Activated CD8-positive, alpha-beta T cell treated with anti-CD3 and anti-CD28 coated beads, Interleukin-2, amount 10 ng/mL, durations not matched to agents 7 days and 5 days (primary cell): ENCODE measurements at regions of chr7 and their contacts with region 1.

Region 1: GRCh38 chr7:50304158-50304910 is at the start of gene IKZF1:
- DNase-seq: peak; percentile 69
- ATAC-seq: peak; percentile 43
- H3K4me3 Mint-ChIP-seq: peak within 1 kb of the TSS; percentile 92
- H3K27ac Mint-ChIP-seq: peak within 1 kb of the TSS; percentile 98
- H3K4me1 Mint-ChIP-seq: peaks cover 35% of the 10 kb centered on the region
- H3K27me3 Mint-ChIP-seq: no peaks in the 10 kb centered on the region
- total RNA-seq, gene IKZF1: 370 to 374 TPM

Region 2: GRCh38 chr7:50047716-50048115 is 256.6 kb before region 1 on chr7:
- CTCF ChIA-PET with region 1: no interaction called
- POLR2A ChIA-PET with region 1: no interaction called
- DNase-seq: no peak
- ATAC-seq: no peak
- H3K4me3 Mint-ChIP-seq: no peak overlapping the region
- H3K27ac Mint-ChIP-seq: no peak overlapping the region
- H3K4me1 Mint-ChIP-seq: no peaks in the 10 kb centered on the region
- H3K27me3 Mint-ChIP-seq: peaks cover 25% of the 10 kb centered on the region

Region 3: GRCh38 chr7:50246551-50246950 is 57.8 kb before region 1 on chr7:
- CTCF ChIA-PET with region 1: no interaction called
- POLR2A ChIA-PET with region 1: no interaction called
- DNase-seq: no peak
- ATAC-seq: no peak
- H3K4me3 Mint-ChIP-seq: no peak overlapping the region
- H3K27ac Mint-ChIP-seq: no peak overlapping the region
- H3K4me1 Mint-ChIP-seq: no peaks in the 10 kb centered on the region
- H3K27me3 Mint-ChIP-seq: no peaks in the 10 kb centered on the region

Region 4: GRCh38 chr7:50266635-50267386 is 37.5 kb before region 1 on chr7:
- CTCF ChIA-PET with region 1: interaction called, 73 read pairs
- POLR2A ChIA-PET with region 1: interaction called, 142 read pairs
- DNase-seq: peak; percentile 91
- ATAC-seq: peak; percentile 71
- H3K4me3 Mint-ChIP-seq: peak overlapping the region; percentile 69
- H3K27ac Mint-ChIP-seq: peak overlapping the region; percentile 98
- H3K4me1 Mint-ChIP-seq: peaks cover 95% of the 10 kb centered on the region
- H3K27me3 Mint-ChIP-seq: no peaks in the 10 kb centered on the region

Region 5: GRCh38 chr7:50293509-50294179 is 10.7 kb before region 1 on chr7:
- CTCF ChIA-PET with region 1: interaction called, 10 read pairs
- POLR2A ChIA-PET with region 1: interaction called, 3 read pairs
- DNase-seq: no peak
- ATAC-seq: no peak
- H3K4me3 Mint-ChIP-seq: no peak overlapping the region
- H3K27ac Mint-ChIP-seq: no peak overlapping the region
- H3K4me1 Mint-ChIP-seq: peaks cover 9% of the 10 kb centered on the region
- H3K27me3 Mint-ChIP-seq: no peaks in the 10 kb centered on the region

Region 6: GRCh38 chr7:50335795-50336754 is 31.7 kb after region 1 on chr7:
- CTCF ChIA-PET with region 1: interaction called, 74 read pairs
- POLR2A ChIA-PET with region 1: interaction called, 80 read pairs
- DNase-seq: peak; percentile 86
- ATAC-seq: peak; percentile 16
- H3K4me3 Mint-ChIP-seq: no peak overlapping the region
- H3K27ac Mint-ChIP-seq: no peak overlapping the region
- H3K4me1 Mint-ChIP-seq: no peaks in the 10 kb centered on the region
- H3K27me3 Mint-ChIP-seq: no peaks in the 10 kb centered on the region

Region 7: DNA sequence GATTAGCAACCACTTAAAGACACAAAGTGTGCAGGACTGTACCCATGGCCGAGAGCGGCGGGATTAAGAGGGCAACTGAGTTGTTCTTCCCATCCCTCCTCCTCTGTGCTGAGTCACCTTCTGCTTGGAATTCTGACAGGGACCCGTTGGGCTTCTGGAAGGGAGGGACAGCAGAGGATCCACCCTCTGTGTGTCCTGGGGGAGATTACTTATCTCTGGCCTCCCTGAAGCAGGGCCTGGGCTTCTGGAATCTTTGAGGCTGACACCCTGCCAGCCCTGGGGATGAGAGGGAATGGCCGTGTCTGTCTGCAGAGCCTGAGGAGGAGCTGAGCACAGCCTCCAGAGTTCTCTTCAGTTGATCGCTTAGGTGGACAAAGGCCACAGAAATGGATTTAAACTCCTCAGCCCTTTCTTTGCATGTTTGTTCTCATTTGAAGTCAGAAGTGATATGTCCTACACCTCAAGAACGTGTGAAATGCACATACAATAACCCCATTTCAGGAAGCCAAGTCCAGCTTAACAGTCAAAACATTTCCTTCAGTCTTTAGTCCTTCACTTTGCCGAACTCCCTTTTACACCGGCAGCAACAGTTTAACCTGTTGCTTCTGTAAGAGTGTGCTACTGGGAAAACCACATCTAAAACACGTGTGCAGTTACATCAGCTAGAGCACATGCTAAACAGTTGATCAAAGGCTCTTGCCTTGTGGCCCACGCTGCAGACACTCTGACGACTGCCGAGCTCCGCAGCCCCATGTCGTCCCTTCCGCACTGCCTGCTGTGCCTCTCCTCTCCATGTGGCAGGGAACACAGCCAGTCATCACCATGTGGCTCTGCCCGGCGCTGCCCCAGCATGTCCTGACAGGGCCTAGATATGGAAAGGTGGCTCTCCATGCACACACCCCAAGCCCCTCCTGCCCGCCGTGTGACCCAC is 55.9 kb after region 1 on chr7:
- CTCF ChIA-PET with region 1: interaction called, 31 read pairs
- POLR2A ChIA-PET with region 1: interaction called, 23 read pairs
- DNase-seq: peak; percentile 89
- ATAC-seq: peak; percentile 87
- H3K4me3 Mint-ChIP-seq: peak overlapping the region; percentile 68
- H3K27ac Mint-ChIP-seq: peak overlapping the region; percentile 96
- H3K4me1 Mint-ChIP-seq: peaks cover 96% of the 10 kb centered on the region
- H3K27me3 Mint-ChIP-seq: no peaks in the 10 kb centered on the region